ENCODE measurements at regions of chr12 and their contacts with region 1.

Region 1: GRCh38 chr12:57983146-57983857 is 41.9 kb downstream of the ATP23 start:
- DNase-seq: peak; percentile 30
- H3K4me3 ChIP-seq: no peak overlapping the region
- H3K27ac ChIP-seq: no peak overlapping the region
- H3K4me1 ChIP-seq: no peaks in the 10 kb centered on the region
- H3K27me3 ChIP-seq: no peaks in the 10 kb centered on the region
- CTCF ChIP-seq: peak; percentile 48 to 65 (median 56)
- EP300 ChIP-seq: no peak
- POLR2A ChIP-seq: no peak

Region 2: GRCh38 chr12:57803319-57803893 is 179.9 kb before region 1 on chr12:
- in situ Hi-C with region 1: no loop called
- intact Hi-C with region 1: no loop called
- DNase-seq: peak; percentile 32
- H3K4me3 ChIP-seq: no peak overlapping the region
- H3K27ac ChIP-seq: no peak overlapping the region
- H3K4me1 ChIP-seq: peaks cover 0 to 3% (median 0%) of the 10 kb centered on the region in 4 donors
- H3K27me3 ChIP-seq: no peaks in the 10 kb centered on the region
- CTCF ChIP-seq: peak; percentile 69 to 76 (median 74)
- EP300 ChIP-seq: no peak
- POLR2A ChIP-seq: no peak

Region 3: DNA sequence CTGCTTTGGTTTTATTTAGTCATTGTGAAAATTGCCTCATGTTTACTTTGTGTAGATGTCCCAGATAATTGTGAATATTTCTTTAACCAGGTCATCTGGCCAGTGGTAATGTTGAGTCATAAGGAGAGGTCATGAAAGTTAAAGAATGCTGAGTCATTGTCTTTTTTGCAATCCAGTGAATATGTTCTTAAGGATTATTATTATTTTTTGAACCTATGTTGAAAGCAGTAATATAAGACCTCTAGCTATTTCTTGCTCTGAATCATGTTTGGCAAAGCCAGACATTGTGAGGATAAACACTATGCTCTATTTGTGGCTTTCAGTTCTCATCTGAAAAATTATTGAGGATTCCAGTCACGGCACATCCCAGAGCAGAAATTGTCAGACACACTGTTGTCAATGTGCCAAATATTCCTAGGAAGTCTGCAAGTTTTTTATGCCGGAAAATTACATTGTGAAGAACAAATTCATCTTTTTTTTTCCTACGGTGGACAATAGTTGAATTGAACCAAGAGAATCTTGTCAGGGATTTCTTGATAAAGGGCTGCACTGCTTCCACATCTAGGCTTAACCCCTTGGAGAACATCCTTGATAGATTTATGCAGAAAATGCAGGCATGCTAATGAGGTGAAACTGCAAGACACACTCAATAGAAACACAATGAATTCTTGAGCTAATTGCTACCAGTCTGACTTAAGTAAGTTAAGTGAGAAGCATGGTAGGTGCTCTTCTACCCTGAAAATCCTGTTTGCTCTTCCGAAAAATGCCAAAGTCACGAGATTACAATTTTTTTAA is 327.7 kb after region 1 on chr12:
- in situ Hi-C with region 1: loop called in 1 of 4 experiments (anchors 25 kb)
- intact Hi-C with region 1: no loop called
- DNase-seq: no peak
- H3K4me3 ChIP-seq: no peak overlapping the region
- H3K27ac ChIP-seq: peak overlapping the region in 1 of 4 donors; percentile 7
- H3K4me1 ChIP-seq: no peaks in the 10 kb centered on the region
- H3K27me3 ChIP-seq: no peaks in the 10 kb centered on the region
- CTCF ChIP-seq: no peak
- EP300 ChIP-seq: no peak
- POLR2A ChIP-seq: no peak

Region 4: GRCh38 chr12:58364389-58365086 is 381.2 kb after region 1 on chr12:
- in situ Hi-C with region 1: loop called in 1 of 4 experiments (anchors 25 kb)
- intact Hi-C with region 1: no loop called
- DNase-seq: no peak
- H3K4me3 ChIP-seq: no peak overlapping the region
- H3K27ac ChIP-seq: peak overlapping the region in 1 of 4 donors; percentile 5
- H3K4me1 ChIP-seq: no peaks in the 10 kb centered on the region
- H3K27me3 ChIP-seq: no peaks in the 10 kb centered on the region
- CTCF ChIP-seq: no peak
- EP300 ChIP-seq: no peak
- POLR2A ChIP-seq: no peak

Measured in transverse colon (tissue), 4 donors.